ENCODE measurements at regions of chr5 and their contacts with region 1.

Region 1: DNA sequence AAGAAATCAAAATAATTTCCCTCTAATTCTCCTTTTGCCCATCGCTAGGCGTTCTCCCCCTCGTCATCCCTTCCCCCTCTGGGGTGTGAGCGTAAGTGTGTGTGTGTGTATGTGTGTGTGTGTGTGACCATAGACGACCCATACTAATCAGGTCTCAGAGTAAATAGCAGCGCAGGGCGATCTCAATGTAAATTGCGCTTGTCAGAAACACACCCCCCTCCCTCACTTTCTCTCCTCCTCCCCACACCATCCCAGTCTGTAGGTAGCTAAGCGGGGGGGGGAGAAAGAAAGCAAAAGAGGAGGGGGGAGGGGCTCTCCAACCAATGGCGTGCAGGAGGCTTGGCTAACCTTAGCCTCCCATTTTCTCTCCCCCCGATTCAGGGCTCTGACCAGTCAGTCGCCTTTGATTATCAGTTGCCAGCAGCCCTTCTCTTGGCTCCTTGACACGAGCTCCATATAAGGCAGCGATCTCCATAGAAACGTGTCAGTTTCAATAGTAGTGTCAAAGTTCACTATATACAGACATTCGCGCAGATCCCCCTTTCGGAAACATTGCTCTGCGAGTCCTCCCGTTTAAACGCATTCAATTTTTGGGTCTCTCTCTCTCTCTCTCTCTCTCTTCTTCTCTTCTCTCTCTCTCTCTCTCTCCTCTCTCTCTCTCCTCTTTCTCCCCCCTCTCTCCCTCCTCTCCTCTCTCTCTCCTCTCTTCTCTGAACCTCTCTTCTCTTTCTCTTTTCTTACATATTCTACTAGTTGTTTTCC is at the start of gene NR2F1:
- DNase-seq: no peak
- ATAC-seq: no peak
- H3K4me3 ChIP-seq: no peak within 1 kb of the TSS
- H3K4me3 Mint-ChIP-seq: peak within 1 kb of the TSS in 1 of 10 donors; percentile 13
- H3K27ac ChIP-seq: no peak within 1 kb of the TSS
- H3K27ac Mint-ChIP-seq: peak within 1 kb of the TSS in 2 of 9 donors; percentile 31 to 70
- H3K4me1 ChIP-seq: peaks cover 26 to 35% of the 10 kb centered on the region in 2 donors
- H3K4me1 Mint-ChIP-seq: peaks cover 14 to 39% (median 35%) of the 10 kb centered on the region in 7 donors
- H3K27me3 ChIP-seq: peaks cover 36 to 70% of the 10 kb centered on the region in 2 donors
- H3K27me3 Mint-ChIP-seq: peaks cover 40 to 47% (median 45%) of the 10 kb centered on the region in 5 donors
- total RNA-seq, gene NR2F1: not detected

Region 2: GRCh38 chr5:93607367-93608258 is 24.8 kb after region 1 on chr5:
- CTCF ChIA-PET with region 1: interaction called, 3 read pairs
- POLR2A ChIA-PET with region 1: interaction called, 3 read pairs
- intact Hi-C with region 1: loop called in 1 of 2 experiments (anchors 1 kb)
- DNase-seq: peak in 1 of 9 donors; percentile 41
- ATAC-seq: peak; percentile 78
- H3K4me3 ChIP-seq: no peak overlapping the region
- H3K4me3 Mint-ChIP-seq: peak overlapping the region in 6 of 10 donors; percentile 10 to 44 (median 34)
- H3K27ac ChIP-seq: no peak overlapping the region
- H3K27ac Mint-ChIP-seq: no peak overlapping the region
- H3K4me1 ChIP-seq: peaks cover 3 to 7% of the 10 kb centered on the region in 2 donors
- H3K4me1 Mint-ChIP-seq: peaks cover 0 to 24% (median 22%) of the 10 kb centered on the region in 7 donors
- H3K27me3 ChIP-seq: peaks cover 42 to 48% of the 10 kb centered on the region in 2 donors
- H3K27me3 Mint-ChIP-seq: peaks cover 75 to 94% (median 79%) of the 10 kb centered on the region in 5 donors

Region 3: GRCh38 chr5:93915142-93915553 is 332.3 kb after region 1 on chr5:
- CTCF ChIA-PET with region 1: no interaction called
- POLR2A ChIA-PET with region 1: no interaction called
- intact Hi-C with region 1: loop called (anchors 1 kb)
- DNase-seq: peak in 6 of 9 donors; percentile 4 to 46 (median 29)
- ATAC-seq: peak; percentile 54
- H3K4me3 ChIP-seq: no peak overlapping the region
- H3K4me3 Mint-ChIP-seq: no peak overlapping the region
- H3K27ac ChIP-seq: no peak overlapping the region
- H3K27ac Mint-ChIP-seq: no peak overlapping the region
- H3K4me1 ChIP-seq: no peaks in the 10 kb centered on the region
- H3K4me1 Mint-ChIP-seq: peaks cover 0 to 5% (median 0%) of the 10 kb centered on the region in 7 donors
- H3K27me3 ChIP-seq: no peaks in the 10 kb centered on the region
- H3K27me3 Mint-ChIP-seq: peaks cover 0 to 2% (median 0%) of the 10 kb centered on the region in 5 donors

Region 4: DNA sequence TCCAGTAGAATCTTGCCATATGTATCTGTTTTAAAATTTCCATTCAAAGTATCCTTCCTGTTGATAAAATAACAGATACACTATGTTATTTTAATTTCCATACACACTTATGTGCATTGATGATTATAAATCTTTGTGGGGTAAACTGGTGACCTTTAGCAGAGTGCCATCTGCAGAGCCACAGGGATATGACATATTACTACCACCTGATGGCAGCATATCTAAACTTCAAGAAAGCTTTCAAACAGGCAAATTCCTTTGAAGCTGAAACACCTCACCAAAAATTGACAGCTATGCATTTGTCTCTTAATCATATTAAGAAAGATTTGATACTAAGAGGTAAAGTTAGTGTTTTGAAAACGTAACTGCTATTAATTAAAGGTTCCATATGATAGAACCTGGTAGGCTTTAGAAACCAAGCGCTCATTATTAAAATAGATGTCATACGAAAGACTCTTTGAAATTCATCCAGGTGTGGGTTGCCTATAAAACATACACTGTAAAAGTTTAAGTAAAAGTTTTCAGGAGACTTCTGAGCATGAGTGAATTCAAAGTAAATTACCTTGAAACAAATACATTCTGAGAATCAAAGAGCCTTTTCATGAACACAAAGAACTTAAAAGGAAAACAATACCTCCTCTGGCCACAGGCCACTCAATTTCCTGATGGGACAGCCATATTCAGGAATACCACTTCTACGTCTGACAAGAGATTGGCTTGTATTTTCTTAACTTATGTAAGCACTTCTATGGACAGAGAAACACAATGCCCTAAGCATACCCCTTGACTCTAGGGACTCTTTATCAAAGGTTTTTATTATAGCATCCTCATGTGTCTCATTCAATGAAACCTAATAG is 942.2 kb after region 1 on chr5:
- CTCF ChIA-PET with region 1: no interaction called
- POLR2A ChIA-PET with region 1: no interaction called
- intact Hi-C with region 1: loop called in 1 of 2 experiments (anchors 5 kb)
- DNase-seq: peak in 7 of 9 donors; percentile 2 to 43 (median 27)
- ATAC-seq: peak; percentile 66
- H3K4me3 ChIP-seq: no peak overlapping the region
- H3K4me3 Mint-ChIP-seq: no peak overlapping the region
- H3K27ac ChIP-seq: no peak overlapping the region
- H3K27ac Mint-ChIP-seq: no peak overlapping the region
- H3K4me1 ChIP-seq: no peaks in the 10 kb centered on the region
- H3K4me1 Mint-ChIP-seq: peaks cover 0 to 3% (median 0%) of the 10 kb centered on the region in 7 donors
- H3K27me3 ChIP-seq: no peaks in the 10 kb centered on the region
- H3K27me3 Mint-ChIP-seq: peaks cover 0 to 5% (median 0%) of the 10 kb centered on the region in 5 donors

Region 5: DNA sequence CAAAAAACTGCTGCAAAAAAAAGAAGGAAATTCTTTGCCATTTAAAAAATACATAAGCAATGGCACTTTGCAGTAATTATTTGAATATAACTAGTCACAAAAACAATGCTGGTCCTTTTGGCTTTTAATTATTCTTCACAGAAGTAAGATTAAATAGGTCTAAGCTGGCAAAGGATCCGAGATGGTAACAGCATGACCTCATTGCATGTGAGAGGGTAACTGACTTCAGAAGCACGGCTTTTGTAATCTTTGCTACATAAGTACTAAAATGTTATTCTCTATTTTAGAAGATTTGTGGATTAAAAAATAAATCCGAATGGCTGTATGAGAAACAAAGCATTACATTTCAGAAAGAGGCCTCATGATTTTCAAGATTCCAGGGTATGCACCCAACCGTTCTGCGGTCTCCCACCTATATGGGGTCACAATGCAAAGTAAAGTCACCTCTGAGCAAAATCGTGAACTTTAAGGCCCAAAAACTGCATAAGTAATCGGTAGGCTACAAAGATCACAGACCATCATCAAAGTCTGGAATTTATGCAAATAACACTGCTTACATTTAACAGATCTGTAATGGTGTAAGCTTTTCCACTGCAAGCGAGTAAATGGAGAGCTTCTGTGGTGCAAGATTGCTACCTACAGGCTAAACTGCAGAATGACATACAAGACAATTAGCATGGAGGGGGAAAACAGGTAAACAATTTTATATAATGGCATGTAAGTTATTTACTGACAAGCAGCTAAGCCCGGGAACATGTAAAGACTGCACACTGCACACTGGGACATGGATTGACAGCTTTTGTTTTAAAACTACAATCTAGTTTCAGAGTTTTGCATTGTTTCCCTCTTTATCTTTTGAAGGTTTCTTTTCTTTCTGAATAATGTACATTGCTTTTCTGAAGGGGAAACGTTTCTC is 1267.2 kb after region 1 on chr5:
- CTCF ChIA-PET with region 1: no interaction called
- POLR2A ChIA-PET with region 1: no interaction called
- intact Hi-C with region 1: loop called in 1 of 2 experiments (anchors 1 kb)
- DNase-seq: peak in 7 of 9 donors; percentile 3 to 42 (median 10)
- ATAC-seq: peak; percentile 87
- H3K4me3 ChIP-seq: no peak overlapping the region
- H3K4me3 Mint-ChIP-seq: no peak overlapping the region
- H3K27ac ChIP-seq: no peak overlapping the region
- H3K27ac Mint-ChIP-seq: no peak overlapping the region
- H3K4me1 ChIP-seq: no peaks in the 10 kb centered on the region
- H3K4me1 Mint-ChIP-seq: peaks cover 0 to 11% (median 0%) of the 10 kb centered on the region in 7 donors
- H3K27me3 ChIP-seq: no peaks in the 10 kb centered on the region
- H3K27me3 Mint-ChIP-seq: peaks cover 0 to 8% (median 5%) of the 10 kb centered on the region in 5 donors